ENCODE measurements at regions of chr14 and their contacts with region 1.

Region 1: GRCh38 chr14:99415496-99416281 is 65.0 kb downstream of the SETD3 start:
- DNase-seq: peak; percentile 73 to 77 (median 74)
- H3K4me3 ChIP-seq: no peak overlapping the region
- H3K4me3 Mint-ChIP-seq: no peak overlapping the region
- H3K27ac ChIP-seq: no peak overlapping the region
- H3K27ac Mint-ChIP-seq: peak overlapping the region in 3 of 7 donors; percentile 10 to 54 (median 13)
- H3K4me1 ChIP-seq: no peaks in the 10 kb centered on the region
- H3K4me1 Mint-ChIP-seq: peaks cover 8 to 18% (median 13%) of the 10 kb centered on the region in 4 donors
- H3K27me3 ChIP-seq: no peaks in the 10 kb centered on the region
- H3K27me3 Mint-ChIP-seq: no peaks in the 10 kb centered on the region

Region 2: GRCh38 chr14:99127651-99128167 is 288.0 kb before region 1 on chr14:
- CTCF ChIA-PET with region 1: no interaction called
- POLR2A ChIA-PET with region 1: no interaction called
- intact Hi-C with region 1: no loop called
- DNase-seq: no peak
- H3K4me3 ChIP-seq: no peak overlapping the region
- H3K4me3 Mint-ChIP-seq: no peak overlapping the region
- H3K27ac ChIP-seq: no peak overlapping the region
- H3K27ac Mint-ChIP-seq: peak overlapping the region in 1 of 7 donors; percentile 70
- H3K4me1 ChIP-seq: peaks cover 8% of the 10 kb centered on the region
- H3K4me1 Mint-ChIP-seq: peaks cover 13 to 29% (median 22%) of the 10 kb centered on the region in 4 donors
- H3K27me3 ChIP-seq: no peaks in the 10 kb centered on the region
- H3K27me3 Mint-ChIP-seq: no peaks in the 10 kb centered on the region

Region 3: DNA sequence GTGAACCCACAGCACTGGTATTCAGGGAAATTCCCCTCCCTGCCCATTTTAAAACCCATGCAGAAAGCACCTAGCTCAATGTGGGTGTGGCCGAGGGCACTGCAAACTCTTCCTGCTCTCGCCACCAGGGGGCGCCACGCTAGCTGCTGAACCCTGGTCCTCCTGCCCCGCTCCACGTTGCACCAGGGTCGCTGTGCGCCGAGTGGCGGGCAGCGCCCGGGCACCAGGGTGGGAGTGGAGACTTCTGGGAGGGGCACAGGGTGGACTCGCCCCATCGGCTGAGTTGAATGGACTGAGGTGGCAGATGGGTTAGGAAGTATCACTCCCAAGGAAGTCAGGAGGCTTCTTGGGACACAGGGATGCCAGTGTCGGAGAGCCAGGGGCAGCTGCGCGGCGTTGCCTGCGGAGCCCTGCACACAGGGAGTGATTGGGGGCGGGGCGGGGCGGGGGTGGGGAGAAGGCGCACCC is 95.5 kb before region 1 on chr14:
- CTCF ChIA-PET with region 1: interaction called, 38 read pairs
- POLR2A ChIA-PET with region 1: no interaction called
- intact Hi-C with region 1: loop called (anchors 1 kb)
- DNase-seq: peak; percentile 57 to 72 (median 61)
- H3K4me3 ChIP-seq: no peak overlapping the region
- H3K4me3 Mint-ChIP-seq: no peak overlapping the region
- H3K27ac ChIP-seq: no peak overlapping the region
- H3K27ac Mint-ChIP-seq: no peak overlapping the region
- H3K4me1 ChIP-seq: peaks cover 5% of the 10 kb centered on the region
- H3K4me1 Mint-ChIP-seq: peaks cover 0 to 14% (median 3%) of the 10 kb centered on the region in 4 donors
- H3K27me3 ChIP-seq: no peaks in the 10 kb centered on the region
- H3K27me3 Mint-ChIP-seq: peaks cover under 1% of the 10 kb centered on the region in 2 donors

Region 4: DNA sequence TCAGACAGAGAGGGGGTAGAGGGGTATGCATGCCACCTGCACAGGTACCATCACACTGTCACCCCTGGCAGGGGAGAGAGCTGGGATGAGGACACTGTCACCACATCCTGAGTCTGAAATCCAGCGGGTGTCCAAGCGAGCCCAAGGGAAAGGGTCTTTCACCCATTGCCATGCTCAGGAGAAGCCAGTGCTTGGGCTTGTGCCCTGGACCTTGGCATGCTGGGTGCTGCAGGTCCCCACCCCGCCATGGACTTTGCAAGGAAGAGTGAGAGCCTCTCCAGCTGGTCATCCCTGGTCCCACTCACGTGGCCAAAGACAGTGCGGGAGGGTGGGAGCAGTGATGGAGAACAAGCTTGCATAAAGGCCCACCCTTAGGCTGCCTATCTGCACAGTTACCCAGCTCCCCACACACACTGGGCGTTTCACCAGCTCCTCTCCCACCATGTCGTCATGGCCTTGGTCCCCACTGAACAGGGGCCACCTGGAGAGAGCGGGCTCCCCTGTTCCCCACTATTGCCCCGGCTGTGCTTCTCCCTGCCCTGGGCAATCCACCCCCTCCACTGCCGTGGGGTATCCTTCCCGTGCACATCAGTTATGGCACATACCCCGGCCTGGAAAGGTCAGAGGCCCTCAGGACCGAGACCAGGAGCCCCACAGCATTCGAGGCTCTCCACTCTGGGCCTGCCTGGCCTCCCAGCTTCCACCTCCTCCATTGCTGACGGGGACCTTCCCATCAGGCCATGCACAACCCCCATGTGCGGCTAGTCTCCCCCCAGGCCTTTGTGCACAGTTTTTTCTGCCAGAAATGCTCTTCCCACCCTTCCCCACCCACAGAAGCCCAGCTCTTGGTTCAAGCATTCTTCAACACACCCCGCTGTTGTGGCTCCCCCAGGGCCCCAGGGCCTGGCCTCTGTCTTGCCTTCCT is 85.1 kb before region 1 on chr14:
- CTCF ChIA-PET with region 1: no interaction called
- POLR2A ChIA-PET with region 1: no interaction called
- intact Hi-C with region 1: no loop called
- DNase-seq: no peak
- H3K4me3 ChIP-seq: no peak overlapping the region
- H3K4me3 Mint-ChIP-seq: no peak overlapping the region
- H3K27ac ChIP-seq: no peak overlapping the region
- H3K27ac Mint-ChIP-seq: no peak overlapping the region
- H3K4me1 ChIP-seq: no peaks in the 10 kb centered on the region
- H3K4me1 Mint-ChIP-seq: no peaks in the 10 kb centered on the region
- H3K27me3 ChIP-seq: no peaks in the 10 kb centered on the region
- H3K27me3 Mint-ChIP-seq: peaks cover 3 to 19% of the 10 kb centered on the region in 2 donors

Region 5: GRCh38 chr14:99374964-99375363 is 40.7 kb before region 1 on chr14:
- CTCF ChIA-PET with region 1: no interaction called
- POLR2A ChIA-PET with region 1: no interaction called
- intact Hi-C with region 1: no loop called
- DNase-seq: no peak
- H3K4me3 ChIP-seq: no peak overlapping the region
- H3K4me3 Mint-ChIP-seq: no peak overlapping the region
- H3K27ac ChIP-seq: no peak overlapping the region
- H3K27ac Mint-ChIP-seq: no peak overlapping the region
- H3K4me1 ChIP-seq: no peaks in the 10 kb centered on the region
- H3K4me1 Mint-ChIP-seq: no peaks in the 10 kb centered on the region
- H3K27me3 ChIP-seq: no peaks in the 10 kb centered on the region
- H3K27me3 Mint-ChIP-seq: peaks cover 12 to 14% of the 10 kb centered on the region in 2 donors

Region 6: GRCh38 chr14:99393047-99393655 is 22.5 kb before region 1 on chr14:
- CTCF ChIA-PET with region 1: interaction called, 182 read pairs
- POLR2A ChIA-PET with region 1: interaction called, 3 read pairs
- intact Hi-C with region 1: loop called (anchors 2 kb)
- DNase-seq: peak in 2 of 5 donors; percentile 19 to 22
- H3K4me3 ChIP-seq: no peak overlapping the region
- H3K4me3 Mint-ChIP-seq: no peak overlapping the region
- H3K27ac ChIP-seq: no peak overlapping the region
- H3K27ac Mint-ChIP-seq: peak overlapping the region in 3 of 7 donors; percentile 22 to 30 (median 29)
- H3K4me1 ChIP-seq: peaks cover 5% of the 10 kb centered on the region
- H3K4me1 Mint-ChIP-seq: peaks cover 7 to 26% (median 15%) of the 10 kb centered on the region in 4 donors
- H3K27me3 ChIP-seq: no peaks in the 10 kb centered on the region
- H3K27me3 Mint-ChIP-seq: no peaks in the 10 kb centered on the region

Region 7: GRCh38 chr14:99401621-99402284 is 13.9 kb before region 1 on chr14:
- CTCF ChIA-PET with region 1: interaction called, 182 read pairs
- POLR2A ChIA-PET with region 1: no interaction called
- intact Hi-C with region 1: no loop called
- DNase-seq: no peak
- H3K4me3 ChIP-seq: no peak overlapping the region
- H3K4me3 Mint-ChIP-seq: peak overlapping the region in 1 of 8 donors; percentile 35
- H3K27ac ChIP-seq: no peak overlapping the region
- H3K27ac Mint-ChIP-seq: peak overlapping the region in 6 of 7 donors; percentile 9 to 92 (median 76)
- H3K4me1 ChIP-seq: no peaks in the 10 kb centered on the region
- H3K4me1 Mint-ChIP-seq: peaks cover 4 to 10% (median 7%) of the 10 kb centered on the region in 4 donors
- H3K27me3 ChIP-seq: no peaks in the 10 kb centered on the region
- H3K27me3 Mint-ChIP-seq: no peaks in the 10 kb centered on the region

Region 8: GRCh38 chr14:99427632-99428300 is 12.1 kb after region 1 on chr14:
- CTCF ChIA-PET with region 1: interaction called, 18 read pairs
- POLR2A ChIA-PET with region 1: no interaction called
- intact Hi-C with region 1: no loop called
- DNase-seq: no peak
- H3K4me3 ChIP-seq: no peak overlapping the region
- H3K4me3 Mint-ChIP-seq: no peak overlapping the region
- H3K27ac ChIP-seq: no peak overlapping the region
- H3K27ac Mint-ChIP-seq: peak overlapping the region in 4 of 7 donors; percentile 4 to 58 (median 12)
- H3K4me1 ChIP-seq: no peaks in the 10 kb centered on the region
- H3K4me1 Mint-ChIP-seq: peaks cover 14 to 23% (median 17%) of the 10 kb centered on the region in 4 donors
- H3K27me3 ChIP-seq: no peaks in the 10 kb centered on the region
- H3K27me3 Mint-ChIP-seq: no peaks in the 10 kb centered on the region

Region 9: GRCh38 chr14:99436247-99437180 is 20.8 kb after region 1 on chr14:
- CTCF ChIA-PET with region 1: interaction called, 13 read pairs
- POLR2A ChIA-PET with region 1: no interaction called
- intact Hi-C with region 1: no loop called
- DNase-seq: peak in 2 of 5 donors; percentile 10 to 16
- H3K4me3 ChIP-seq: no peak overlapping the region
- H3K4me3 Mint-ChIP-seq: peak overlapping the region in 7 of 8 donors; percentile 28 to 72 (median 67)
- H3K27ac ChIP-seq: peak overlapping the region; percentile 18
- H3K27ac Mint-ChIP-seq: peak overlapping the region; percentile 58 to 94 (median 85)
- H3K4me1 ChIP-seq: peaks cover 36% of the 10 kb centered on the region
- H3K4me1 Mint-ChIP-seq: peaks cover 34 to 58% (median 42%) of the 10 kb centered on the region in 4 donors
- H3K27me3 ChIP-seq: no peaks in the 10 kb centered on the region
- H3K27me3 Mint-ChIP-seq: no peaks in the 10 kb centered on the region

Measured in CD4-positive, alpha-beta memory T cell (primary cell).